Heart left ventricle (tissue), 16 donors: ENCODE measurements at regions of chr18 and their contacts with region 1.

Region 1: DNA sequence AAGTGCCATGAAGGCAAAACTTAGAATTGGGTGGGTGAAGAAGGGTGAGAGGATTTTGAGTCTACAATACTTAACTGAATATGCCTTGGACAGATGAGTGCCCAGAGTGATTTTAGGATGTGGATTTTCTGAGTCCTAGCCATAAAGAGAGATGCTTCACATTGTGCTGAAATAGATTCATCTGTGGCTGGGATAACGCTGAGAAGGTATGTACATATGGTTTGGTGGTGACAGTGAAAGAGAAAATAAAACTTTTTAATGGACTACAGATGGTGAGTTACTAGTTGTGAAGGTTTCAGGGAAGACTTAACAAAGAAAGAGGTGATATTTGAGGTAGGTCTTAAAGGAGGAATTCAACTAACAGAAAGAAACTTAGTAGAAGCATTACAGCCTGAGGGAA is 265.8 kb downstream of the AKAIN1 start:
- DNase-seq: no peak
- ATAC-seq: no peak
- H3K4me3 ChIP-seq: no peak overlapping the region
- H3K27ac ChIP-seq: no peak overlapping the region
- H3K4me1 ChIP-seq: no peaks in the 10 kb centered on the region
- H3K27me3 ChIP-seq: no peaks in the 10 kb centered on the region
- CTCF ChIP-seq: no peak
- POLR2A ChIP-seq: no peak

Region 2: DNA sequence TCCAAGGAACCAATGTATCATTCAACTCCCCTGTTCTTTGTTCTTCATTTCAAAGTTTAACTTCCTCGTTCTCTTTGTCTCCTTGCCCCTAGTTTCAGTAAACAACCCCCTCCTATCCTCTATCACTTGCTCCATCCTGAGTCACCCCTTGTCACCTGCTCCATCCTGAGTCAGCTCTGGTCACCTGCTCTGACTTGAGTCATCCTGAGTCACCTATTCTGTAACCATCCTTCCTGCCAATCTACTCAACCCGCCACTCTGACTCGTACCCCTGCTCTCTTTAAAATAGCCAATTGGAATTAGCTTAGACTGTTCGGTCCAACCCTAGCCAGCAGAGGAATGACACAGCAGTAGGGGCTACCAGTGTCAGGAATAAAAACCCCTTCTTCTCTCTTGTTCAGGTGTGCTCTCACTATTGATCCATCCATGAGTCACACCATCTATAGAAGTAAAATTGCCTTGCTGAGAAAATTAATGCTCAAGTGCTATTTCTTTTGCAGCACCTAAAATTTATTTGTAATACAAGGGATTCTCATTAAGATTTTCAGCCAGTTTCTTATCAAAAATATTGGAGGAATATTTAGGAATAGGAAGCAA is 60.9 kb before region 1 on chr18:
- intact Hi-C with region 1: loop called in 1 of 10 experiments (anchors 10 kb)
- DNase-seq: no peak
- ATAC-seq: no peak
- H3K4me3 ChIP-seq: no peak overlapping the region
- H3K27ac ChIP-seq: no peak overlapping the region
- H3K4me1 ChIP-seq: no peaks in the 10 kb centered on the region
- H3K27me3 ChIP-seq: no peaks in the 10 kb centered on the region
- CTCF ChIP-seq: no peak
- POLR2A ChIP-seq: no peak